ENCODE measurements at regions of chr1 and their contacts with region 1.

Region 1: DNA sequence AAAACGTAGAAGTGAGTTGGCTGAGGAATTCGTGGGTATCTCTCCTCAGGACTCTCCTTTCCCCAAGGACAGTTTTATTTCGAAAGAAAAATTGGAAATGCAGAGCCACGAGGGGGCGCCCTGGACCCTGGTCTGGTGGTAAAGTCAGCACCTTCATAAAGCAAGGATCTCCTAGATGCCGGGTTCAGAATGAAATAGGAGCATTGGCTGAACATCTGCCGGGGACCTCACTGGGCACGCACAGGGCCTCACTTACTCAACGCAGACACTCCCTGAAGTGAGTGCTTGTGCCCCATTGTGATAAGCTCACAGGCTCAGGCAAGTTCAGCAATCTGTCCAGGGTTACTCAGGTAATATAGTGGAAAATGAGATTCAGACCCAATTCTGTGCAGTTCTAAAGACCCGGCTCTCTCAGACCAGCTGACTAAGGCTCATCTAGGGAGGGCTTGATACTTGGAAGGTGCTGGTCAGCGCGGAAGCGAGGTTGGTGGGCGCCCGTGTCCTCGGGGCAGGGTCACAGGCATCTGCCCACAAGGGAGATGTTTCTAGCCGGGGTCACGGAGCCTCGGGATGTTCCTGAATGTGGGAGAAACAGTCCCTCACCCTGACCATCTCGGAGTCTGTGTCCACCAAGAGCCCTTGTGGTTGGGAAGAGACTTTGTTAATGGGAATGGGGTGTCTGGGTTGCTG is 55.7 kb upstream of the ETV3 start:
- DNase-seq: peak; percentile 68
- ATAC-seq: peak; percentile 36
- H3K4me3 Mint-ChIP-seq: no peak overlapping the region
- H3K27ac Mint-ChIP-seq: no peak overlapping the region
- H3K4me1 Mint-ChIP-seq: peaks cover 8% of the 10 kb centered on the region
- H3K27me3 Mint-ChIP-seq: peaks cover 39% of the 10 kb centered on the region

Region 2: GRCh38 chr1:157369808-157370521 is 176.1 kb after region 1 on chr1:
- CTCF ChIA-PET with region 1: interaction called, 13 read pairs
- DNase-seq: peak; percentile 58
- ATAC-seq: peak; percentile 51
- H3K4me3 Mint-ChIP-seq: no peak overlapping the region
- H3K27ac Mint-ChIP-seq: no peak overlapping the region
- H3K4me1 Mint-ChIP-seq: peaks cover 1% of the 10 kb centered on the region
- H3K27me3 Mint-ChIP-seq: peaks cover 22% of the 10 kb centered on the region

Region 3: DNA sequence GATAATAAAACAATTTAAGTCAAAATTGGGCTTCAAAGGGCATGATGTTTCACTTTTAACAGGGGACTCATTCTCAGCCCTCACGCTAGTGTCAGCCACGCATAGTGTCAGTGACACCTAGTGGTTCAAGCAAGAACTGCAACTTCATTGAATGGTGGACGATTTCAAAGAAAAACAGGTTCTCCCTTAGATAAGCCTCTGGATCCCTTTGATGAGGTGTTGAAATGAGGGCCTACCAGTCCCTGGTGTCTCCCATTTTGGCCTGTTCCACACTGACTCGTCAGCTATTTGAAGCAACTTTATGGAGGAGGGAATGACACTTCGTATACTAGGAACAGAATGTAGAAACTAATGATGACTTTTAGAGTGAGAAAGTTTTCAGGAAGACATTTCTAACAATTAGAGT is 302.3 kb after region 1 on chr1:
- CTCF ChIA-PET with region 1: interaction called, 21 read pairs
- DNase-seq: peak; percentile 54
- ATAC-seq: peak; percentile 63
- H3K4me3 Mint-ChIP-seq: no peak overlapping the region
- H3K27ac Mint-ChIP-seq: no peak overlapping the region
- H3K4me1 Mint-ChIP-seq: peaks cover 2% of the 10 kb centered on the region
- H3K27me3 Mint-ChIP-seq: peaks cover 55% of the 10 kb centered on the region